ENCODE measurements at regions of chr11 and their contacts with region 1.

Region 1: DNA sequence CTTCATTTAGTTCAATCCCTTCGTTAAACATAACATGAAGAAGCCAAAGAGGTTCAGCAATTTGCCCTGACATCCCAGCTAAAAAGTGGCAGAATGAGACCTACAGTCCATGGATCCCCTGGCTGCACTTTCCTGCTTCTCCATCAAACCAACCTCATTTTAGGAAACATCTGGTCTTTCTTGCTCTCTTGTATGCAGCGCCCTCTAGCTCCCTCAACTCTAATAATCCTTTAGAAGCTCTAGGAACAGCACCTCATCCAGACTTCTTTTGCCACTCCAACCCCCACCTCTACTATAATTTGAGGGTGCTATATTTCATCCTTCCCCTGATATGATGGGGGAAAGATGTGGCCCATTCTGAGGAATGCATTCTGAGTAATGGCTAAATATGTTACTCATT is 7.4 kb downstream of the CNTF start:
- DNase-seq: no peak
- ATAC-seq: peak; percentile 85
- H3K4me3 Mint-ChIP-seq: no peak overlapping the region
- H3K27ac Mint-ChIP-seq: no peak overlapping the region
- H3K4me1 Mint-ChIP-seq: peaks cover 2% of the 10 kb centered on the region
- H3K27me3 Mint-ChIP-seq: no peaks in the 10 kb centered on the region
- CTCF ChIP-seq: no peak; the same call in 1 of the 2 replicates

Region 2: GRCh38 chr11:58567889-58568512 is 61.9 kb before region 1 on chr11:
- CTCF ChIA-PET with region 1: interaction called, 23 read pairs
- POLR2A ChIA-PET with region 1: no interaction called
- DNase-seq: peak; percentile 69
- ATAC-seq: peak; percentile 88
- H3K4me3 Mint-ChIP-seq: no peak overlapping the region
- H3K27ac Mint-ChIP-seq: no peak overlapping the region
- H3K4me1 Mint-ChIP-seq: no peaks in the 10 kb centered on the region
- H3K27me3 Mint-ChIP-seq: no peaks in the 10 kb centered on the region
- CTCF ChIP-seq: peak; percentile 73

Region 3: DNA sequence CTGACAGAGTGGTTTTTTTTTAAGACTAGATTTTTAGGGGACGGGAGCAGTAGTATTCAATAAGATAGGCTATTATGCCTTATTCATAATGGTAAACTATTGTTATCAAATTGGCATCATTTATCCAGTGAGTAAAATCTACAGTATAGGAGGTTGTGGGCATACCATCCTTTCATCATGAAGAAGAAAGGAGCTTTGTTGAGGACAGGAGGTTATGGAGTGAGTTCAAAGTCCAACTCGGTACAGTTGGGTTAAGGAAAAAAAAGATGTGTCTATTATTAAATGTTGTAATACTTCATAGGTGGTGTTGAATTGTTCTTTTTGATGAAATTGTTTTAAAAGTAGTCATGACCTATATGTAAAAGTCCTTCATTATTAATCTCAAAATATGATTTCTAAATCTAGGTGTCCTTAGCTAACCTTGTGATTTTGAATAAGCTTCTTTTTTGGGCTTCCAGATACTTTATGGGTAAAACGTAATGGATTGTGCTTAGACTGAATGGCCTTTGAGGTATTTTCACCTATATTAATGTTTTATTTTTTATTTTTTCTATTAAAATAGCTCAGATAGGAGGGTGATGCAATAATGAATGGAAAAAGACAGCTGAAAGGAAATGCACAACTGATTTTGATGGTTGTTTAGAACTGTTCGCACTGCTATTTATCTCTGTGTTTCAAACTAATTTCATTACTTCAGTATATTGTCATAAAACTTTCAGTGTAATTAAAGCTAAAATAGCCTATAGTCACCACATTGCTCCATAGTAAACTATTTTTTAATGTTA is 22.7 kb before region 1 on chr11:
- CTCF ChIA-PET with region 1: interaction called, 18 read pairs
- POLR2A ChIA-PET with region 1: no interaction called
- DNase-seq: no peak
- ATAC-seq: no peak
- H3K4me3 Mint-ChIP-seq: no peak overlapping the region
- H3K27ac Mint-ChIP-seq: 0 out of 2 replicates have a peak overlapping the region, but pooled peaks have one; percentile 22
- H3K4me1 Mint-ChIP-seq: peaks cover 17% of the 10 kb centered on the region
- H3K27me3 Mint-ChIP-seq: no peaks in the 10 kb centered on the region
- CTCF ChIP-seq: no peak

Region 4: GRCh38 chr11:58640386-58641023 is 10.6 kb after region 1 on chr11:
- CTCF ChIA-PET with region 1: interaction called, 22 read pairs
- POLR2A ChIA-PET with region 1: no interaction called
- DNase-seq: no peak
- ATAC-seq: no peak
- H3K4me3 Mint-ChIP-seq: no peak overlapping the region
- H3K27ac Mint-ChIP-seq: no peak overlapping the region
- H3K4me1 Mint-ChIP-seq: no peaks in the 10 kb centered on the region
- H3K27me3 Mint-ChIP-seq: no peaks in the 10 kb centered on the region
- CTCF ChIP-seq: no peak

Region 5: DNA sequence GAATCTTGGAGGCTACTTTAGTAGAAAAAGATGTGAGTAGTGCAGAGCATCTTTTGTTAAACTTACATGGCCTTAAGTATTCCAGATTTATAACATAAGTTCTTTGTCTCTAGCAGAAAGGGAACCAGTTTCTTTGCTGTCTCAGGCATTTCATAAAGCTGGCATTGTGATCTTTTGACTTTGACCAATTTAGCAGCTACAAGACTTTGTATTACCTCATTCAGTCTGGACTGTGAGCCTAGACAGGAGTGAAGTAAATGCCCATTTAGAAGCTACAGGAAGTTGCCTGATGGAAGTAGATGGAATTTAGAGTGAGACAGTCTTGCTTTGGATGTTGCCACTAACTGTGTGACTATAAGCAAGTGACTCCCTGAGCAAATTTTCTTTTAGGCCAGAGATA is 127.6 kb after region 1 on chr11:
- CTCF ChIA-PET with region 1: no interaction called
- POLR2A ChIA-PET with region 1: no interaction called
- DNase-seq: no peak
- ATAC-seq: no peak
- H3K4me3 Mint-ChIP-seq: no peak overlapping the region
- H3K27ac Mint-ChIP-seq: no peak overlapping the region
- H3K4me1 Mint-ChIP-seq: no peaks in the 10 kb centered on the region
- H3K27me3 Mint-ChIP-seq: peaks cover 5% of the 10 kb centered on the region
- CTCF ChIP-seq: no peak

Measured in WTC11 (cell line).